ENCODE measurements at regions of chr3 and their contacts with region 1.

Region 1: GRCh38 chr3:159260049-159260662 is 458.3 kb downstream of the MFSD1 start:
- DNase-seq: peak; percentile 55
- ATAC-seq: no peak
- H3K4me3 ChIP-seq: no peak overlapping the region
- H3K4me3 Mint-ChIP-seq: no peak overlapping the region
- H3K27ac ChIP-seq: no peak overlapping the region
- H3K27ac Mint-ChIP-seq: no peak overlapping the region
- H3K4me1 ChIP-seq: no peaks in the 10 kb centered on the region
- H3K4me1 Mint-ChIP-seq: no peaks in the 10 kb centered on the region
- H3K27me3 ChIP-seq: no peaks in the 10 kb centered on the region
- H3K27me3 Mint-ChIP-seq: peaks cover 34% of the 10 kb centered on the region
- CTCF ChIP-seq: peak; percentile 82

Region 2: GRCh38 chr3:158790901-158791589 is 469.1 kb before region 1 on chr3:
- CTCF ChIA-PET with region 1: interaction called, 3 read pairs
- POLR2A ChIA-PET with region 1: no interaction called
- intact Hi-C with region 1: loop called (anchors 2 kb)
- DNase-seq: peak; percentile 67
- ATAC-seq: peak; percentile 47
- H3K4me3 ChIP-seq: no peak overlapping the region
- H3K4me3 Mint-ChIP-seq: peak overlapping the region; percentile 42
- H3K27ac ChIP-seq: no peak overlapping the region
- H3K27ac Mint-ChIP-seq: no peak overlapping the region
- H3K4me1 ChIP-seq: peaks cover 5 to 7% of the 10 kb centered on the region in 2 donors
- H3K4me1 Mint-ChIP-seq: peaks cover 3% of the 10 kb centered on the region
- H3K27me3 ChIP-seq: no peaks in the 10 kb centered on the region
- H3K27me3 Mint-ChIP-seq: peaks cover 4% of the 10 kb centered on the region
- CTCF ChIP-seq: peak; percentile 86

Region 3: GRCh38 chr3:158918008-158918407 is 342.1 kb before region 1 on chr3:
- CTCF ChIA-PET with region 1: interaction called, 12 read pairs
- POLR2A ChIA-PET with region 1: no interaction called
- intact Hi-C with region 1: no loop called
- DNase-seq: peak; percentile 17
- ATAC-seq: no peak
- H3K4me3 ChIP-seq: no peak overlapping the region
- H3K4me3 Mint-ChIP-seq: no peak overlapping the region
- H3K27ac ChIP-seq: no peak overlapping the region
- H3K27ac Mint-ChIP-seq: no peak overlapping the region
- H3K4me1 ChIP-seq: no peaks in the 10 kb centered on the region
- H3K4me1 Mint-ChIP-seq: no peaks in the 10 kb centered on the region
- H3K27me3 ChIP-seq: no peaks in the 10 kb centered on the region
- H3K27me3 Mint-ChIP-seq: no peaks in the 10 kb centered on the region
- CTCF ChIP-seq: peak; percentile 29

Region 4: GRCh38 chr3:159091936-159092335 is 168.2 kb before region 1 on chr3:
- CTCF ChIA-PET with region 1: no interaction called
- POLR2A ChIA-PET with region 1: no interaction called
- intact Hi-C with region 1: no loop called
- DNase-seq: no peak
- ATAC-seq: no peak
- H3K4me3 ChIP-seq: no peak overlapping the region
- H3K4me3 Mint-ChIP-seq: no peak overlapping the region
- H3K27ac ChIP-seq: no peak overlapping the region
- H3K27ac Mint-ChIP-seq: no peak overlapping the region
- H3K4me1 ChIP-seq: no peaks in the 10 kb centered on the region
- H3K4me1 Mint-ChIP-seq: no peaks in the 10 kb centered on the region
- H3K27me3 ChIP-seq: no peaks in the 10 kb centered on the region
- H3K27me3 Mint-ChIP-seq: no peaks in the 10 kb centered on the region
- CTCF ChIP-seq: no peak

Region 5: DNA sequence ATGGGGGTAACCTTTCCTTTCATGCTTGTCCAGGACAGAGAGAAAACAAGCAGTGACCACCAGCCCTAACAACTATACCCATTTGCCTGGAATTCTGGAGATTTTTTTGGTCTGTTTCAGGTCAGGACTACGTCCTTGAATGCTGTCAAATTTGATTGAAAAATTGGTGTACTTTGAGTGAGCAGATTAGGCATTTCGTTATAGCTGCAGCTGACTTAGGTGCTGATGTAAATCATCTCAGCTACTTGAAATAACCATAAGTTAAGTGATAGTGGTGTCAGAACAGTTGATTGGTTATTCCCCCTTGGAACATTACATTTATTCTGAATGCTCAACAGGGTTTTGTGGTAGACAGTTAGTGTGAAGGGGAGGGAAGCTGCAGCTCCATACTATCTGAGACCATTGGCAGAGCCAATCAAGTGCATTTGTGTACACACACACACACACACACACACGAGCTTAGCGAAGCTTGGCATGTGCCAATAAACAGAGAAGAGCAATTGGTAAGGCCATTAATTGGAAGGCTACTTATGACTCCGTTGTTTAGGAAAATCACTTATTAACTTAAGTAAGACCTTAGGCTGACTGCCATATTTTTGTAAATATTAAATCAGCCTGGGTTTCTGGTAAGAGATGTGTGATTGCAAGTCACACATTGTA is 10.6 kb before region 1 on chr3:
- CTCF ChIA-PET with region 1: interaction called, 11 read pairs
- POLR2A ChIA-PET with region 1: no interaction called
- intact Hi-C with region 1: no loop called
- DNase-seq: no peak
- ATAC-seq: no peak
- H3K4me3 ChIP-seq: no peak overlapping the region
- H3K4me3 Mint-ChIP-seq: no peak overlapping the region
- H3K27ac ChIP-seq: no peak overlapping the region
- H3K27ac Mint-ChIP-seq: no peak overlapping the region
- H3K4me1 ChIP-seq: no peaks in the 10 kb centered on the region
- H3K4me1 Mint-ChIP-seq: no peaks in the 10 kb centered on the region
- H3K27me3 ChIP-seq: peaks cover 0 to 2% (median 0%) of the 10 kb centered on the region in 4 experiments
- H3K27me3 Mint-ChIP-seq: peaks cover 4% of the 10 kb centered on the region
- CTCF ChIP-seq: no peak

Region 6: GRCh38 chr3:160003520-160004128 is 743.5 kb after region 1 on chr3:
- CTCF ChIA-PET with region 1: no interaction called
- POLR2A ChIA-PET with region 1: no interaction called
- intact Hi-C with region 1: loop called (anchors 5 kb)
- DNase-seq: peak; percentile 64
- ATAC-seq: peak; percentile 82
- H3K4me3 ChIP-seq: no peak overlapping the region
- H3K4me3 Mint-ChIP-seq: no peak overlapping the region
- H3K27ac ChIP-seq: no peak overlapping the region
- H3K27ac Mint-ChIP-seq: peak overlapping the region; percentile 34
- H3K4me1 ChIP-seq: no peaks in the 10 kb centered on the region
- H3K4me1 Mint-ChIP-seq: peaks cover 6% of the 10 kb centered on the region
- H3K27me3 ChIP-seq: no peaks in the 10 kb centered on the region
- H3K27me3 Mint-ChIP-seq: no peaks in the 10 kb centered on the region
- CTCF ChIP-seq: peak; percentile 71